OCI-LY7 (cell line): ENCODE measurements at regions of chrX and their contacts with region 1.

Region 1: GRCh38 chrX:96770315-96770714 is 85.7 kb downstream of the DIAPH2 start:
- DNase-seq: peak; percentile 23
- H3K4me3 ChIP-seq: no peak overlapping the region
- H3K27ac ChIP-seq: no peak overlapping the region
- H3K4me1 ChIP-seq: no peaks in the 10 kb centered on the region
- CTCF ChIP-seq: peak; percentile 79

Region 2: GRCh38 chrX:96835660-96836289 is 65.5 kb after region 1 on chrX:
- CTCF ChIA-PET with region 1: no interaction called
- POLR2A ChIA-PET with region 1: no interaction called
- intact Hi-C with region 1: loop called (anchors 5 kb)
- DNase-seq: peak; percentile 84
- H3K4me3 ChIP-seq: peak overlapping the region; percentile 43
- H3K27ac ChIP-seq: peak overlapping the region; percentile 98
- H3K4me1 ChIP-seq: peaks cover 58% of the 10 kb centered on the region
- CTCF ChIP-seq: no peak

Region 3: DNA sequence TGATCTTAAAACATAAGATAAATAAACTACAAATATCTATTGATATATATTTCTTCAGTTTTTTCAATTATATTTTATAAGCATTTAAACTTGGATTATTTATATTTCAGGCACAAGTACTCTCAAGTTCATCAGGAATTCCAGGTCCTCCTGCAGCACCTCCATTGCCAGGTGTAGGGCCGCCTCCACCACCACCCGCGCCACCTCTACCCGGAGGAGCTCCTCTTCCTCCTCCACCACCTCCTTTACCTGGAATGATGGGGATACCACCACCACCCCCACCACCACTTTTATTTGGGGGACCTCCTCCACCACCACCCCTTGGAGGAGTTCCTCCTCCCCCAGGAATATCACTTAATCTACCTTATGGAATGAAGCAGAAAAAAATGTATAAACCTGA is 187.4 kb after region 1 on chrX:
- CTCF ChIA-PET with region 1: no interaction called
- POLR2A ChIA-PET with region 1: no interaction called
- intact Hi-C with region 1: no loop called
- DNase-seq: no peak
- H3K4me3 ChIP-seq: no peak overlapping the region
- H3K27ac ChIP-seq: no peak overlapping the region
- H3K4me1 ChIP-seq: no peaks in the 10 kb centered on the region
- CTCF ChIP-seq: no peak

Region 4: GRCh38 chrX:97685753-97686152 is 915.4 kb after region 1 on chrX:
- CTCF ChIA-PET with region 1: no interaction called
- POLR2A ChIA-PET with region 1: no interaction called
- intact Hi-C with region 1: loop called (anchors 10 kb)
- DNase-seq: peak; percentile 53
- H3K4me3 ChIP-seq: no peak overlapping the region
- H3K27ac ChIP-seq: no peak overlapping the region
- H3K4me1 ChIP-seq: no peaks in the 10 kb centered on the region
- CTCF ChIP-seq: peak; percentile 84